ENCODE measurements at regions of chr6 and their contacts with region 1.

Region 1: GRCh38 chr6:94437433-94437832 is 1018.1 kb upstream of the EPHA7 start:
- DNase-seq: no peak
- ATAC-seq: no peak
- H3K4me3 ChIP-seq: no peak overlapping the region
- H3K27ac ChIP-seq: no peak overlapping the region
- H3K4me1 ChIP-seq: no peaks in the 10 kb centered on the region
- H3K27me3 ChIP-seq: no peaks in the 10 kb centered on the region
- CTCF ChIP-seq: no peak

Region 2: GRCh38 chr6:92473056-92473455 is 1964.4 kb before region 1 on chr6:
- intact Hi-C with region 1: no loop called
- DNase-seq: no peak
- ATAC-seq: no peak
- H3K4me3 ChIP-seq: no peak overlapping the region
- H3K27ac ChIP-seq: no peak overlapping the region
- H3K4me1 ChIP-seq: no peaks in the 10 kb centered on the region
- H3K27me3 ChIP-seq: no peaks in the 10 kb centered on the region
- CTCF ChIP-seq: no peak

Region 3: DNA sequence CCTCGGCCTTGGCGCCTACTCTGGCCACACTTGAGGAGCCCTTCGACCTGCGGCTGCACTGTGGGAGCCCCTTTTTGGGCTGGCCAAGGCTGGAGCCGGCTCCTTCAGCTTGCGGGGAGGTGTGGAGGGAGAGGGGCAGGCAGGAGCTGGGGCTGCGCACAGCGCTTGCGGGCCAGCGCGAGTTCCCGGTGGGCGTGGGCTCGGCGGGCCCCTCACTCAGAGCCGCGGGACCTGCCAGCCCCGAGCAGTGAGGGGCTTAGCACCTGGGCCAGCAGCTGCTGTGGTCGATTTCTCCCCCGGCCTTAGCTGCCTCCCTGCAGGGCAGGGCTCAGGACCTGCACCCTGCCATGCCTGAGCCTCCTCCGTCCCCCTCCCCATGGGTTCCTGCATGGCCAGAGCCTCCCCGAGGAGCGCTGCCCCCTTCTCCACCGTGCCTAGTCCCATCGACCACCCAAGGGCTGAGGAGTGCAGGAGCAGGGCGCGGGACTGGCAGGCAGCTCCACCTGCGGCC is 1154.9 kb before region 1 on chr6:
- intact Hi-C with region 1: loop called in 1 of 2 experiments (anchors 10 kb)
- DNase-seq: peak; percentile 6 to 34
- ATAC-seq: no peak
- H3K4me3 ChIP-seq: no peak overlapping the region
- H3K27ac ChIP-seq: no peak overlapping the region
- H3K4me1 ChIP-seq: no peaks in the 10 kb centered on the region
- H3K27me3 ChIP-seq: no peaks in the 10 kb centered on the region
- CTCF ChIP-seq: no peak

Region 4: DNA sequence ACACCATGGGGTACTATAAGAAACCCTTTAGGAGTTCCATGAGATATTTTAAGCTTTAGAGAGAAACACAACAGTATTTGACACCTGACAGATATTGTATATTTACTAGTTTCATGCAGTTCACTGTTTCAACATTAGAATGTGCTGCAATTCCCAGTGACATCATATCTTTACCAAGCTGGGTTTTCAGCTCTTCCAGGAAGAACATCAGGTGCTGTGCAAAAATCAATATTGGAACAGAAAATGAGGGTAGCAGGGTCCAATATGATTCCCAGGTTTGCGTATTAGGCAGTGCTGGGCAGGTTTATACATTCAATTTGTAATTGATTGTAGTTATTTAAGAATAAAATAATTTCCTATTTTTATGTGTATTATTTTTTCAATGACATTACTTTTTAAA is 518.1 kb before region 1 on chr6:
- intact Hi-C with region 1: no loop called
- DNase-seq: no peak
- ATAC-seq: no peak
- H3K4me3 ChIP-seq: no peak overlapping the region
- H3K27ac ChIP-seq: no peak overlapping the region
- H3K4me1 ChIP-seq: no peaks in the 10 kb centered on the region
- H3K27me3 ChIP-seq: no peaks in the 10 kb centered on the region
- CTCF ChIP-seq: no peak

Measured in psoas muscle (tissue), 8 donors.